Vagina (tissue), 2 donors: ENCODE measurements at regions of chr16 and their contacts with region 1.

Region 1: GRCh38 chr16:30534368-30535105 is at the start of gene ZNF747:
- DNase-seq: peak in 1 of 2 donors; percentile 94
- H3K4me3 ChIP-seq: peak within 1 kb of the TSS; percentile 90 to 92
- H3K27ac ChIP-seq: peak within 1 kb of the TSS; percentile 92
- H3K4me1 ChIP-seq: peaks cover 38% of the 10 kb centered on the region
- H3K27me3 ChIP-seq: no peaks in the 10 kb centered on the region
- CTCF ChIP-seq: peak in 1 of 3 experiments; percentile 21
- POLR2A ChIP-seq: peak in 1 of 2 donors; percentile 45
- total RNA-seq, gene ZNF747: 10.6 TPM

Region 2: GRCh38 chr16:30075507-30076275 is 458.8 kb before region 1 on chr16 and contains the start of gene PPP4C:
- intact Hi-C with region 1: loop called (anchors 5 kb)
- DNase-seq: no peak
- H3K4me3 ChIP-seq: peak within 1 kb of the TSS; percentile 84 to 100
- H3K27ac ChIP-seq: peak within 1 kb of the TSS; percentile 94
- H3K4me1 ChIP-seq: peaks cover 37% of the 10 kb centered on the region
- H3K27me3 ChIP-seq: no peaks in the 10 kb centered on the region
- CTCF ChIP-seq: peak in 1 of 3 experiments; percentile 13
- POLR2A ChIP-seq: peak in 1 of 2 donors; percentile 46
- total RNA-seq, gene PPP4C: 60.4 TPM

Region 3: GRCh38 chr16:30445408-30446202 is 88.9 kb before region 1 on chr16 and contains the start of gene SEPHS2:
- intact Hi-C with region 1: loop called (anchors 10 kb)
- DNase-seq: peak in 1 of 2 donors; percentile 98
- H3K4me3 ChIP-seq: peak within 1 kb of the TSS; percentile 79 to 93
- H3K27ac ChIP-seq: peak within 1 kb of the TSS; percentile 85
- H3K4me1 ChIP-seq: peaks cover 20% of the 10 kb centered on the region
- H3K27me3 ChIP-seq: no peaks in the 10 kb centered on the region
- CTCF ChIP-seq: no peak
- POLR2A ChIP-seq: peak in 1 of 2 donors; percentile 84
- total RNA-seq, gene SEPHS2: 28.0 TPM

Region 4: DNA sequence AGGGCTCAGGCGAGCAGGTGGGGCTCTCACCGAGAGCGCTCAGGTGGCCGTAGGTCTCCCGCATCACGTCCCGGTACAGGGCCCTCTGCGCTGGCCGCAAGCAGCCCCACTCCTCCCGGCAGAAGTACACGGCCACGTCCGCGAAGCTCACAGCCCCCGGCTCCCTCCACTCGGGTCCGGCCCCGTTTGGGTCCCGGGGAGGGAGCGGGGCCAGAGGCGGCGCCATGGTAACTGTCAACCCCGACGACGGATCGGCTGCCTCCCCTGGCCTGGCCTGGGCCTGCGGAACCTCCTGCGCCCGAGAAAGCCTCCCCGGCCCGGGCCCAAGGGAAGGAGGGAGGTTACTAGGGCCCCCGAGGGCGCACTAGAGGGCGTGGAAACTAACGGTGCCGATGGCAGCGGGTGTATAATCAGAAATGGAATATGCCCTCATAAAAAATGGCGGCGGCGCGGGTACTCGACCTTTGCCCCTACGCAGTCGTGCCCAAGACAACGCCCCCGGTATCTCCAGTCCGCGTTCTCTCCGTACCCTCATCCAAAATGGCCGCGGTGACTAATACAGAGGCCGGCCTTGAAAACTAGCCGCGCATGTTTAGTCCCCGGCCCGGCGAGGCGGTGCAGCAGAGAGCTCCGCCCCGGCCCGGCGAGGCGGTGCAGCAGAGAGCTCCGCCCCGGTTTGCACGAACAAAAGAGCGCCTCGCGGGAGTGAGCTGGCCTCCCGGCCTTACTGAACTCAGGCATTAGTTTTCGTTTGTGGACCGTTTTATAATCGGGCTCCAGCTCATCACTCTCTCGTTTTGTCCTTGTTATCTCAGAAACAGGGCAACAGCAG is 23.6 kb after region 1 on chr16 and contains the start of gene ZNF764:
- intact Hi-C with region 1: loop called (anchors 2 kb)
- DNase-seq: peak in 1 of 2 donors; percentile 98
- H3K4me3 ChIP-seq: peak within 1 kb of the TSS; percentile 78 to 95
- H3K27ac ChIP-seq: peak within 1 kb of the TSS; percentile 77
- H3K4me1 ChIP-seq: peaks cover 31% of the 10 kb centered on the region
- H3K27me3 ChIP-seq: no peaks in the 10 kb centered on the region
- CTCF ChIP-seq: peak in 1 of 3 experiments; percentile 16
- POLR2A ChIP-seq: no peak
- total RNA-seq, gene ZNF764: 18.4 TPM

Region 5: DNA sequence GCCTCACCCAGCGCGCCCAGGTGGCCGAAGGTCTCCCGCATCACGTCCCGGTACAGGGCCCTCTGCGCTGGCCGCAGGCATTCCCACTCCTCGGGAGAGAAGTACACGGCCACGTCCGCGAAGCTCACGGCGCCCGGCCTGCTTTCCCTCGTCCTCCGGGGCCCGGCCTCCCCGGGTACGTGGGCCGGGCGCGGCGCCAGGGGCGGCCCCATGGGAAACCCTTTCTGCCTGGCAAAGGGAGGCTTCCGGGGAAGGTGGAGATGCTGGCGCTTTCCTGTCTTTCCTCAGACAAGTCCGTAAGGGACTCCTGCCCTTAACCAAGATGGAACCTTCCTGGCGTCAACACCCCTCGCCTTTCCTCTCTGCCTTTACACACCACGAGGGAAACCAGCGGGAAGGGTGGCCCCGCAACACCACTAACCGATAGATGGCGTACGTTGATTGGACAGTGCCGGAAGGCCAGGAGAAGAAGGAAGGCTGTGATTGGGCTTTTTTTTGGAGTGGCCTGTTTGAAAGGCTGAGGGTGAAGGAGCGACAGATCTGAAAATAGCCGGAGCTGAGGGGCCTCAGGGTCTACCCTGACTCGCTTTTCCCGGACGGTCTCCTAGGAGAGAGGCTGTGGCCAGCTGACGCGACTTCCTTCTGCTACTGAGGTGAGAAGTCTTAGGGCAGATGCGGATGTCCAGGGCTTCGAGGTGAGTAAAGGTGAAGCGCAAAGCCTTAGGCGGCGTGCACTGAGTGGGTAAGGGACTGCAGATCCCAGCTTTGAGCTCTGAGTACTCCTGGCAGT is 51.1 kb after region 1 on chr16 and contains the start of gene ZNF785:
- intact Hi-C with region 1: loop called (anchors 10 kb)
- DNase-seq: peak in 1 of 2 donors; percentile 99
- H3K4me3 ChIP-seq: peak within 1 kb of the TSS; percentile 87 to 90
- H3K27ac ChIP-seq: peak within 1 kb of the TSS; percentile 92
- H3K4me1 ChIP-seq: peaks cover 45% of the 10 kb centered on the region
- H3K27me3 ChIP-seq: no peaks in the 10 kb centered on the region
- CTCF ChIP-seq: no peak
- POLR2A ChIP-seq: peak in 1 of 2 donors; percentile 23
- total RNA-seq, gene ZNF785: 21.6 TPM